ENCODE measurements at regions of chr4 and their contacts with region 1.

Region 1: GRCh38 chr4:139229534-139230039 is 50.4 kb downstream of the MGARP start:
- DNase-seq: peak in 4 of 5 donors; percentile 42 to 54 (median 48)
- H3K4me3 ChIP-seq: no peak overlapping the region
- H3K4me3 Mint-ChIP-seq: no peak overlapping the region
- H3K27ac ChIP-seq: no peak overlapping the region
- H3K27ac Mint-ChIP-seq: no peak overlapping the region
- H3K4me1 ChIP-seq: no peaks in the 10 kb centered on the region
- H3K4me1 Mint-ChIP-seq: peaks cover 0 to 3% (median 1%) of the 10 kb centered on the region in 4 donors
- H3K27me3 ChIP-seq: no peaks in the 10 kb centered on the region
- H3K27me3 Mint-ChIP-seq: no peaks in the 10 kb centered on the region

Region 2: DNA sequence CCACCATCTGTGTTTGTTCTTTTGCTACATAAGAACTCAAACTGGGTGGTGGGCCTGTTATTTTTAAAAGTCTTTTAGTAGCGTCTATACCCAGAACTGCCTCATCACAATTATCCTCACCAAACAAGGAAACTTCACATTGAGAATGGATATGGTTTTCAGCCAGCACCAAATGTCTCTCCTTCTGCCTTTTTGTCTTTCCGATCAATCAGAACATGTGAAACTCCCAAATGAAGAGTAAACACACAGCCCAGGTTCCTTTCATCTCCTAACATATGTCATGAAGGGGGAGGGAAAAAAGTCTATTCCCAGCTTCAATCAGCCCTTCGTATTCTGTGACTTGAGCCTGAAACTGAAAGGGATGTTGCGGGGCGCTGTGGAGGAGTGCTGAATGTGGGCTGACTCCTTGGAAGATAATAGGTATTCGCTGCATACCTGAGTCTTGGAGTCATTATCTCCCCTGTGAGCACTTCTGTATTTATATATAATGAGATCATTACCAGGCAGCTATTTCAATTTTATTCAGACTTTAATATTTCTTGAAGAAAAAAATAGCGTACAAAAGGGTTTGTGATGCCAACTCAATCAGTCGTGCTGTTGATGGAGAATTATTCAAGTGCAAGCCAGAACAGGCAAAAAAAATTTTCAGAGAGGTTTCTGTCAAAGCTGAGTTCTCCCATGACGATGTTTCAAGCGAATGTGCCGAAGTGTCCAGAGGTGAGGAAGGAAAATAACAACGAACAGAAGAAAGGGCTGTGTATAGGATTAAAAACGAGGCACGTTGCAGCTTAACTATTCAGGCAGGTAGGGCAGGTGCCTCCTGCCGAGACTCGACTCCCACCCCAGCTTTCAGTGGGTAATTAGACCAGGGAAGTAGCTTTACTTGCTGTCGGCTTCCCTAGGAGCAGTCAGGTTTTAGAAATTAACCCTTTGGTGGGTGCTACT is 377.9 kb before region 1 on chr4:
- CTCF ChIA-PET with region 1: no interaction called
- POLR2A ChIA-PET with region 1: no interaction called
- intact Hi-C with region 1: no loop called
- DNase-seq: no peak
- H3K4me3 ChIP-seq: no peak overlapping the region
- H3K4me3 Mint-ChIP-seq: peak overlapping the region in 4 of 8 donors; percentile 20 to 57 (median 44)
- H3K27ac ChIP-seq: no peak overlapping the region
- H3K27ac Mint-ChIP-seq: no peak overlapping the region
- H3K4me1 ChIP-seq: no peaks in the 10 kb centered on the region
- H3K4me1 Mint-ChIP-seq: peaks cover 4 to 11% (median 6%) of the 10 kb centered on the region in 4 donors
- H3K27me3 ChIP-seq: no peaks in the 10 kb centered on the region
- H3K27me3 Mint-ChIP-seq: peaks cover 5 to 12% of the 10 kb centered on the region in 2 donors

Region 3: DNA sequence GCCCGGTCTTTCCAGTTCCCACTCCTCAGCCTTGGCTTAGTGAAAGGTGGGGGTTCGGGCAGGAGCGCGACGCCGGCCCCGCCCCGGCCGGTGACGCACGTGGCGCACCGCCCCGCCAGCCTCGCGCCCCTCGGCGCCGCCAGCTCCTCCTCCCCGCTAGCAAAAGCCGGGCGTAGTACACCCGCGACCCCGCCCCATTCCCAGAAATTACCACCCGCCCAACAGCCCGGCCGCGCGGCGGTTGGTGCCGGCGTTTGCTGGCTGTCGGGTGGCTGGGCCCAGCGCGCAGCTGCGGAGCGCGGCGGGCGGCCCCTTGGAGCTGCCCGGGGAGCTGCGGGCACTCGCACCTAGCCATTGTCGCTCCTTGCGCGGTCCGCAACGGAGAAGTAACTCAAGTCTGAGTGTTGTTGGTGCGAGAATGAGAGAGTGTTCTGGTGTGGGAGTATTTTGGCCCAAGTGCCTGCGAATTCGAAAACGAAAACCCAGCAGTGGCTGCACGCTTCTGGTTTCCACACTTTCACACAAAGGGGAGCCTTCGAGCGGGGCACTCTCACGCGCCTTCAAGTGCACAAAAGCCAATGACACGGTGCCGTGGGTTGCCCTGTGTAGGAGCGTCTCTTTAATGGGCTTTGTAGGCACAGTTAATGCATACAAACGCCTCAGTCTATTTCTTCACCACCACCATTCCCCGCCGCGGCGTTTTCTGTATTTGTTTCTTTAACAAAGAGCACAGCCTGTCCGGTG is 51.5 kb before region 1 on chr4:
- CTCF ChIA-PET with region 1: interaction called, 4 read pairs
- POLR2A ChIA-PET with region 1: no interaction called
- intact Hi-C with region 1: loop called (anchors 5 kb)
- DNase-seq: peak; percentile 92 to 94 (median 92)
- H3K4me3 ChIP-seq: peak overlapping the region; percentile 88 to 89
- H3K4me3 Mint-ChIP-seq: peak overlapping the region; percentile 89 to 94 (median 92)
- H3K27ac ChIP-seq: peak overlapping the region; percentile 96
- H3K27ac Mint-ChIP-seq: peak overlapping the region; percentile 92 to 97 (median 96)
- H3K4me1 ChIP-seq: peaks cover 17% of the 10 kb centered on the region
- H3K4me1 Mint-ChIP-seq: peaks cover 14 to 29% (median 18%) of the 10 kb centered on the region in 4 donors
- H3K27me3 ChIP-seq: no peaks in the 10 kb centered on the region
- H3K27me3 Mint-ChIP-seq: no peaks in the 10 kb centered on the region

Region 4: GRCh38 chr4:139266583-139267257 is 37.1 kb after region 1 on chr4:
- CTCF ChIA-PET with region 1: interaction called, 6 read pairs
- POLR2A ChIA-PET with region 1: interaction called, 3 read pairs
- intact Hi-C with region 1: loop called (anchors 5 kb)
- DNase-seq: peak; percentile 61 to 86 (median 73)
- H3K4me3 ChIP-seq: peak overlapping the region; percentile 34 to 38
- H3K4me3 Mint-ChIP-seq: peak overlapping the region; percentile 79 to 91 (median 86)
- H3K27ac ChIP-seq: peak overlapping the region; percentile 47
- H3K27ac Mint-ChIP-seq: peak overlapping the region; percentile 74 to 94 (median 87)
- H3K4me1 ChIP-seq: peaks cover 19% of the 10 kb centered on the region
- H3K4me1 Mint-ChIP-seq: peaks cover 12 to 17% (median 15%) of the 10 kb centered on the region in 4 donors
- H3K27me3 ChIP-seq: no peaks in the 10 kb centered on the region
- H3K27me3 Mint-ChIP-seq: peaks cover 0 to 2% of the 10 kb centered on the region in 2 donors

Region 5: DNA sequence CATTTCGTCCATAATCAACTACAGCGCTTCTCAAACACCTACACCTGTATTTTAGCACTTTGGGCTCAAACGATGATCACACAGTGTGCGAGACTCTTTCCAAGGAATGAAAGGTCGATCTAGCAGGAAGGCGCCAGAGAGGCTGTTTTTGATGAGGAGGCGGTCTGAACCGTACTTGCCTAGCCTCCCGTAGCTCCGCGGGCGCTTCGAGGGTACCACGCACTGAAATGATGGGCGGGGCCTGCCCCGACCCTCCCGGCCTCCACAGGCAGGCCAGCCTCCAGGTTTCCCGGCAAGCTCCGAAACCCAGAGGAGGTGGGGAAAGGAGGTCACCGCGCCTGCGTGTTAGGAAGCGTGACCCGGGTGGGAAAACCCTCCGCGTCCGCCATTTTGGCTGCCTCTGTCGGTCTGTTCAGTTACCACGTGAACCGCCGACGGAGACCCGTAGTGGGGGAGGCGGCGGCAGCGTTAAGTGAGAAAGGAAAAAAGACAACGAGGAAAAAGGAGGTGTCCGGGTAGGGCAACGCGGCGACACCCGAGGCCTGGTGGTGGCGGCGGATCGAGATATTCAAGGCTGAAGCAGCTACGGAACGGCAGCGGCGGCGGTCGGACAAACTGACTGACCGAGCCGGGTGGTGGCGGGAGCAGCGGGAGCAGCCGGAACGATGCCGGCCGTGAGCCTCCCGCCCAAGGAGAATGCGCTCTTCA is 71.7 kb after region 1 on chr4 and contains the start of gene NAA15:
- CTCF ChIA-PET with region 1: interaction called, 46 read pairs
- POLR2A ChIA-PET with region 1: no interaction called
- intact Hi-C with region 1: no loop called
- DNase-seq: peak; percentile 97 to 99 (median 97)
- H3K4me3 ChIP-seq: peak within 1 kb of the TSS; percentile 69 to 94
- H3K4me3 Mint-ChIP-seq: peak within 1 kb of the TSS; percentile 96 to 100 (median 99)
- H3K27ac ChIP-seq: peak within 1 kb of the TSS; percentile 98
- H3K27ac Mint-ChIP-seq: peak within 1 kb of the TSS; percentile 94 to 100 (median 99)
- H3K4me1 ChIP-seq: peaks cover 56% of the 10 kb centered on the region
- H3K4me1 Mint-ChIP-seq: peaks cover 22 to 73% (median 43%) of the 10 kb centered on the region in 4 donors
- H3K27me3 ChIP-seq: no peaks in the 10 kb centered on the region
- H3K27me3 Mint-ChIP-seq: no peaks in the 10 kb centered on the region
- total RNA-seq, gene NAA15: 45.8 to 46.5 TPM

Region 6: DNA sequence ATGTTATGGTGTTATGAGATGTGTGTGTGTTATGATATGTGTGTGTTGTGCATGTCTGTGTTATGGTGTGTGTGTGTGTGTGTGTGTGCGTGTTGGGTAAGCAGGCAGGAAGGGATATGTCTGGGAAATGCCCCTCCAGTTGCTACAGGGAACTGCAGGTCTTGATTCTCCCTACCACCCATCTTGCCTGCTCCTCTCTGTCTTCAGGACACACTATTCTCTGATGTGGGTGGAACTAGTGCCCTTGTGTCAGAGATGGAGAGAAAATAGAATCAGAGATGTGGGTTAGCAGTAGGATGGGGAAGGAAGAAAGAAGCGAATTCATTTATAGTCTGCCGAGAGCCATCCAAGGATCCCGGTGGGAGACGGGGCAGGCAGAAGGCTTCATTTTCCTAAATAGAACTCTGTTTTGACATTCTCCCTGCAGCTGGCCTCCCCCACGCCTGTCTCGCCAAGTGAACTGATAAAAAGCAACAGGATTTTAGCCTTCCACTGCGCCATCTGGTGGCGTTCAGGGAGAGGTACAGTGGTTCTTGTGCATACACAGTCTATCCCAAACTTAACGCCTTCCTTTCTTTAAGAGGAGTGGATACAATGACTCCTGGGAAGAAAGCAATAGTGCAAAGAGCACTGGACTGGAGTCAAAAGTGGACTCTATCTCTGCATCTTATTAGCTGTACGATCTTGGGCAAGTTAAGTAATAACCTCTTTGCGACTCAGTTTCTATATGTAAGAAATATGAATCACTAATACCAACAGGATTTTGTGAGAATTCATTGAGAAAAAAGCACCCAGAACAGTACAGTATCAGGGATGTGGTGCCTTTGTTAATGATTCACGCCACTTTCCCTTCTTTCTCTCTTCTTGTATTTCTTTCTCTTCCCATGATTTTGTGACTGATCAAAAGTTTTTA is 422.0 kb after region 1 on chr4:
- CTCF ChIA-PET with region 1: interaction called, 6 read pairs
- POLR2A ChIA-PET with region 1: no interaction called
- intact Hi-C with region 1: loop called (anchors 1 kb)
- DNase-seq: peak; percentile 56 to 68 (median 61)
- H3K4me3 ChIP-seq: no peak overlapping the region
- H3K4me3 Mint-ChIP-seq: peak overlapping the region in 4 of 8 donors; percentile 6 to 32 (median 14)
- H3K27ac ChIP-seq: no peak overlapping the region
- H3K27ac Mint-ChIP-seq: no peak overlapping the region
- H3K4me1 ChIP-seq: no peaks in the 10 kb centered on the region
- H3K4me1 Mint-ChIP-seq: peaks cover 0 to 7% (median 5%) of the 10 kb centered on the region in 4 donors
- H3K27me3 ChIP-seq: no peaks in the 10 kb centered on the region
- H3K27me3 Mint-ChIP-seq: peaks cover 0 to 2% of the 10 kb centered on the region in 2 donors

Measured in CD4-positive, alpha-beta memory T cell (primary cell).